ENCODE measurements at regions of chr9 and their contacts with region 1.

Region 1: GRCh38 chr9:5186416-5187169 is 1.2 kb upstream of the INSL6 start:
- DNase-seq: peak; percentile 77
- ATAC-seq: peak; percentile 87
- H3K4me3 Mint-ChIP-seq: no peak overlapping the region
- H3K27ac Mint-ChIP-seq: no peak overlapping the region
- H3K4me1 Mint-ChIP-seq: peaks cover 12% of the 10 kb centered on the region
- H3K27me3 Mint-ChIP-seq: no peaks in the 10 kb centered on the region

Region 2: DNA sequence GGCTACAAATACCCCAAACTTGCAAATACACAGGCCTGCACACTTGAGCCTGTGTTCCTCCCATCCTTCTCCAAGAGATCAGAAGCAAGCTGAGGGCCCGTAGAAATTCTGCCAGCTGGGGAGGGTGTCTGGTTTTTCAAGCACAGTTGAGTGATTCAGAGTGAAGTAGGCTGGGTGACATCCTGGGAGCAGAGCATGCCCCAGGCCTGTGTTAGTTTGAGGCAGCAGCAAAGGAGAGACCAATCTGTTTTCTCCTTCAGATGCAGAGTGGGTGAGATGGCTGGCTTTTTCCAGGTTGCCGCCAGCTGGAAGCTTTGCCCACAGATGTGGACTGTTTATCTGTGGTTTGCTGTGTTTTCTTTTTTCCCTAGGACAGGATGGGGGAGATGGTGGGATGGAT is 330.8 kb before region 1 on chr9:
- CTCF ChIA-PET with region 1: no interaction called
- POLR2A ChIA-PET with region 1: no interaction called
- DNase-seq: no peak
- ATAC-seq: no peak
- H3K4me3 Mint-ChIP-seq: no peak overlapping the region
- H3K27ac Mint-ChIP-seq: no peak overlapping the region
- H3K4me1 Mint-ChIP-seq: peaks cover 13% of the 10 kb centered on the region
- H3K27me3 Mint-ChIP-seq: no peaks in the 10 kb centered on the region

Region 3: GRCh38 chr9:5425006-5425628 is 238.5 kb after region 1 on chr9:
- CTCF ChIA-PET with region 1: interaction called, 105 read pairs
- POLR2A ChIA-PET with region 1: interaction called, 4 read pairs
- DNase-seq: no peak
- ATAC-seq: peak; percentile 71
- H3K4me3 Mint-ChIP-seq: no peak overlapping the region
- H3K27ac Mint-ChIP-seq: no peak overlapping the region
- H3K4me1 Mint-ChIP-seq: no peaks in the 10 kb centered on the region
- H3K27me3 Mint-ChIP-seq: no peaks in the 10 kb centered on the region

Region 4: DNA sequence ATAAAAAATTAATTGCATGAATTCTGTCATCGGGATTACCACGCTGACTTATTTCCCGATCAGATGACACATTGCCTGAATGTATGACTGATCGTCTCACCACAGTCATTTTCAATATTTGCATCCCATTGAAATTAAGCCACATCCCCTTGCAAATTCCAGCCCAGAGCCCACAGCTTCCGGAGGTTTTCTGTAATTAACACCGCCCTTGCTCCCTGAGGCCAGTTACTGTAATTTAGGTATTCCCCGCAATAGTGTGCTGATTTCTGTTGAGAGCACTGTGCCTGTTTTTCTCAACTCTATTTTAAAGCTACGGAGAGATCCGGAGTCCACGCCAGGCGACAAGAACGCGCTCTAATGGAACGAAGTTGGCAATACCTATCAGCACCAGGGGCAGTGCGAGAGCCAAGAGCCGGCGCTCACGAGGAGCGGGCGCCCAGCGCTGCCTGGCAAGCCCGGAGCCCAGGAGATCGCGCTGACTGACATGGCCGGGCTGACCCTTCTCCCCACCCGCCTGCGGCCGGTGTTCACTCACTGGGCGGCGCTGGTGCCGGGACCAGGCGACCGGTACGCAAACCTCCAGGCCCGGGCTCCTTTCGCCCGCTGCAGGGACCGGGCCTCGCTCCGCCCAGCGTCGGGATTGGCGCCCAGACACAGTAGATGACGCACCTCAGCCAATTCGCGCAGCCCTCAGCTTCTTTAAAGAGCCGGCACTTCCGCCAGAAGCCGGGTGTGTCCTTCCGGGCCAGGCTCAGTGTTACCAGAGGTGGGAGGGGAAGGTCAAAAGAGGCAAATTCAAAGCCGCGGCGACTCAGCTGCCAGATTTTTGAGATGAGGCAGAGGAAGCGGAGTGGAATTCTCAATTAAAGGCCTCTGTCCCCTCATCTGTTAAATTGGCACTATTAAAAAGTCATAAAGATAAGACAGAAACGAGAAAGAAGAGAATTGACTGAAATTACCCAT is 250.9 kb after region 1 on chr9 and contains the start of gene PLGRKT:
- CTCF ChIA-PET with region 1: interaction called, 28 read pairs
- POLR2A ChIA-PET with region 1: interaction called, 4 read pairs
- DNase-seq: peak; percentile 95
- ATAC-seq: peak; percentile 99
- H3K4me3 Mint-ChIP-seq: peak within 1 kb of the TSS; percentile 96
- H3K27ac Mint-ChIP-seq: peak within 1 kb of the TSS; percentile 96
- H3K4me1 Mint-ChIP-seq: peaks cover 29% of the 10 kb centered on the region
- H3K27me3 Mint-ChIP-seq: no peaks in the 10 kb centered on the region
- total RNA-seq, gene PLGRKT: 30.5 to 30.7 TPM

Measured in activated CD8-positive, alpha-beta T cell treated with anti-CD3 and anti-CD28 coated beads, Interleukin-2, amount 10 ng/mL, durations not matched to agents 7 days and 5 days (primary cell).